Lower leg skin (tissue), 4 donors: ENCODE measurements at regions of chr11 and their contacts with region 1.

Region 1: GRCh38 chr11:63478896-63479295 is 12.1 kb downstream of the PLAAT5 start:
- DNase-seq: peak in 1 of 2 donors; percentile 47
- H3K4me3 ChIP-seq: no peak overlapping the region
- CTCF ChIP-seq: peak in 1 of 3 donors; percentile 65
- POLR2A ChIP-seq: no peak

Region 2: DNA sequence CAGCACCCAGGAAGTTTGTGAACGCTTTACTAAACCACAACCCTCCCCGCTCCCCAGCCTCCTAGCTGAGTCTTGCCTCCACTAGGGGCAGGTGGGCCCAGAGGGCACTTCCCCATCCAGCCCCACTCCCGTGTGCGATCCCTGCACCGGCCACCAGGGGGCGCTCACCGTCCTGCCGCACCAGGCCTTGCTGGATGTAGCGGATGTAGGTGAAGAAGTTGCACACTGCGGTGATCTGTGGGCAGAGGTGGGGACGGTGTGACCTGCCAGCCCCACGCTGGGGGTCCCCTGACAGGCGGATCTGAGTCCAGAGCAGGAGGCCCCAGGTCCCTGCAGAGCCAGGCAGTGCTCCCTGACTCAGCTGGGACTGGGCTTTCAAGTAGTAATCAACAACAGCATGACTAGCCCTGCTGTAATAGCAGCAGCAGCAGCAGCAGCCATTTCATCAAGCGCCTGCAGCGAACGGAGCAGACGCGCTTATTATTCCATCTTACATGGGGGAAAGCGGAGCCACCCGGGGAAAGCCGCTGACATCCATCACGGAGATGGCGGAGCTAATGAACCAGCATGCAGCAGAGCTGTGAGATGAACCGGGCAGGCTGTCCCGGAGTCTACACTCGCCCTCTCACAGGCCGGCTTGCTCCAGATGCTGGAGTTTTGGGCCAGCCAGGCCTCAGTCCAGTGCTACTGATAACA is 1579.6 kb before region 1 on chr11:
- intact Hi-C with region 1: no loop called
- DNase-seq: peak; percentile 67 to 97
- H3K4me3 ChIP-seq: no peak overlapping the region
- CTCF ChIP-seq: peak in 1 of 3 donors; percentile 97
- POLR2A ChIP-seq: no peak

Region 3: GRCh38 chr11:63635762-63636465 is 157.0 kb after region 1 on chr11:
- intact Hi-C with region 1: loop called (anchors 2 kb)
- DNase-seq: peak in 1 of 2 donors; percentile 38
- H3K4me3 ChIP-seq: no peak overlapping the region
- CTCF ChIP-seq: no peak
- POLR2A ChIP-seq: no peak

Region 4: DNA sequence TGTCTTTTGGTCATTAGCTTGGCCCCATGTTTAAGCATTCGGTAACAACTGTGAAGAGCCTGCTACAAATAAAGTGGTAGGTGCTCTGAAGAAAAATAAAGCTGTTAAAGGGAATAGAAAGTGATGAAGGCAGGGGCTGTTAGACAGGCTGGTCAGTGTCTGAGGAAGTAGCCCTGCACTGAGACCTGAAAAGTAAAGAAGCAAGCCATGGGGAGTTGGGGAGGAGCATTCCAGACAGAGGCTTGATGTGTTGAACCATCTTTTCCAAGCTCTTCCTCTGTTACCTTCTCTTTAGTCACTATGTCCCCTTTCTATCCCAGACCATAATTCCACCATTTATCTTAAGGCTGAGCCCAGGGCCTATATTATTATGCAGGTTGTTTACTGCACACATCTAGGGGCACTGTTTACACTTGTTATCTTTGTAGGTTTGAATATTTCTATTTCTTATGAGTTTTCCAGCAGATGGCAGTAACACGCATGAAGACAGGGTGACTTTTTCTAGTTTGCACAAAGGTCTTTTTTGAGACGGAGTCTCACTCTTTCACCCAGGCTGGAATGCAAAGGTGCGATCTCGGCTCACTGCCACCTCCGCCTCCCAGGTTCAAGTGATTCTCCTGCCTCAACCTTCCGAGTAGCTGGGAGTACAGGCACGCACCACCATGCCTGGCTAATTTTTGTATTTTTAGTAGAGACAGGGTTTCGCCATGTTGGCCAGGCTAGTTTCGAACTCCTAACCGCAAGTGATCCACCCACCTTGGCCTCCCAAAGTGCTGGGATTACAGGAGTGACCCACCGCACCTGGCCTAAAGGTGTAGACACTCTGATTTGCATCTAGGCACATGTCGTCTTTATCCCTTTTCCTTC is 266.6 kb after region 1 on chr11:
- intact Hi-C with region 1: loop called (anchors 10 kb)
- DNase-seq: peak in 1 of 2 donors; percentile 67
- H3K4me3 ChIP-seq: no peak overlapping the region
- CTCF ChIP-seq: no peak
- POLR2A ChIP-seq: no peak